ENCODE measurements at regions of chr17 and their contacts with region 1.

Region 1: DNA sequence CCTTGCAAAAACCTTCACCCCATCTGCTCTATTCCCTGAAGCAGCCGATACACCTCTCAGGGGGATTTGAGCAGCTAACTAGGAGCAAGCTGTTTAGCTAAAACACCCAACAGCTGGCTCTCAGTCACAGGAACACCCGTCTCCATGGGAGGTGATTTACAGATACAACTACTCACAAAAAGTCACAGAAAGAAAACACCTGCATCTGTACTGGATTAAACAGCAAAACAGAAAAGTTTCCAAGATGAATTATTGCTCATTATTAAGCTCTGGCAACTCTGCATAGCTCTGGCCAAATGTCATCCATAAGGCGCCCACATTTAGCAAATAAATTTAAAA is 22.3 kb downstream of the GJC1 start:
- DNase-seq: no peak
- ATAC-seq: 0 out of 2 replicates have a peak, but pooled peaks have one; percentile 39
- H3K4me3 ChIP-seq: no peak overlapping the region
- H3K27ac ChIP-seq: no peak overlapping the region
- H3K4me1 ChIP-seq: peaks cover 6% of the 10 kb centered on the region
- H3K27me3 ChIP-seq: no peaks in the 10 kb centered on the region
- CTCF ChIP-seq: no peak

Region 2: DNA sequence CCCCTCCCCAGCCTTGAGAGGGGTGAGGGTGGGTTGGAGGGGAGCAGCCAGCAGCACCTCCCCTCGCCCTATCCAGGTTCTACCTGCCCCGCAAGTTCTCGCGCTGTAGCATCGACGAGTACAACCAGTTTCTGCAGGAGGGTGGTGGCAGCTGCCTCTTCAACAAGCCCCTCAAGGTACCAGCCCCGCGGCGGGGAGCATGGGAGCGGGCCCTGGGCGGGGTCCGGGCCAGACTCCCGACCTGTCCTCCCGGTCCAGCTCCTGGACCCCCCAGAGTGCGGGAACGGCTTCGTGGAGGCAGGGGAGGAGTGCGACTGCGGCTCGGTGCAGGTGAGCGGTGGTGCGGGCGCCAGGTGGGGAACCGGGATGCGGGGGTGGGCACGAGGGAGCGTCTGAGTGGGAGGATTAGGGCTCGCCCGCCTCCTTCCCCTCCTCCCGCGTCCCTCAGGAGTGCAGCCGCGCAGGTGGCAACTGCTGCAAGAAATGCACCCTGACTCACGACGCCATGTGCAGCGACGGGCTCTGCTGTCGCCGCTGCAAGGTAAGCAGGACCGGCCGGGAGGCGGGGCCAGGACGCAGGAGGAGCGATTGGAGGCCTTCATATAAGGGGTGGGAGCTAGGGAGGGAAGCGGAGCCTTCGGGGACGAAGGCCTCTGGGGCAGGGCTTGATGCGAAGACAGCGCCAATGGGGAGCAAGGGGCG is 32.5 kb before region 1 on chr17:
- CTCF ChIA-PET with region 1: no interaction called
- POLR2A ChIA-PET with region 1: interaction called, 26 read pairs
- in situ Hi-C with region 1: no loop called
- intact Hi-C with region 1: no loop called
- DNase-seq: no peak
- ATAC-seq: peak; percentile 90
- H3K4me3 ChIP-seq: peak overlapping the region; percentile 58 to 65
- H3K27ac ChIP-seq: no peak overlapping the region
- H3K4me1 ChIP-seq: peaks cover 3% of the 10 kb centered on the region
- H3K27me3 ChIP-seq: no peaks in the 10 kb centered on the region
- CTCF ChIP-seq: peak; percentile 25

Region 3: GRCh38 chr17:44794851-44795413 is 12.9 kb before region 1 on chr17:
- CTCF ChIA-PET with region 1: no interaction called
- POLR2A ChIA-PET with region 1: interaction called, 17 read pairs
- in situ Hi-C with region 1: no loop called
- intact Hi-C with region 1: no loop called
- DNase-seq: peak; percentile 92
- ATAC-seq: peak; percentile 80
- H3K4me3 ChIP-seq: peak overlapping the region in 1 of 2 experiments; percentile 16; a peak in 1 of 4 replicates
- H3K27ac ChIP-seq: peak overlapping the region; percentile 60
- H3K4me1 ChIP-seq: peaks cover 36% of the 10 kb centered on the region
- H3K27me3 ChIP-seq: no peaks in the 10 kb centered on the region
- CTCF ChIP-seq: no peak

Region 4: DNA sequence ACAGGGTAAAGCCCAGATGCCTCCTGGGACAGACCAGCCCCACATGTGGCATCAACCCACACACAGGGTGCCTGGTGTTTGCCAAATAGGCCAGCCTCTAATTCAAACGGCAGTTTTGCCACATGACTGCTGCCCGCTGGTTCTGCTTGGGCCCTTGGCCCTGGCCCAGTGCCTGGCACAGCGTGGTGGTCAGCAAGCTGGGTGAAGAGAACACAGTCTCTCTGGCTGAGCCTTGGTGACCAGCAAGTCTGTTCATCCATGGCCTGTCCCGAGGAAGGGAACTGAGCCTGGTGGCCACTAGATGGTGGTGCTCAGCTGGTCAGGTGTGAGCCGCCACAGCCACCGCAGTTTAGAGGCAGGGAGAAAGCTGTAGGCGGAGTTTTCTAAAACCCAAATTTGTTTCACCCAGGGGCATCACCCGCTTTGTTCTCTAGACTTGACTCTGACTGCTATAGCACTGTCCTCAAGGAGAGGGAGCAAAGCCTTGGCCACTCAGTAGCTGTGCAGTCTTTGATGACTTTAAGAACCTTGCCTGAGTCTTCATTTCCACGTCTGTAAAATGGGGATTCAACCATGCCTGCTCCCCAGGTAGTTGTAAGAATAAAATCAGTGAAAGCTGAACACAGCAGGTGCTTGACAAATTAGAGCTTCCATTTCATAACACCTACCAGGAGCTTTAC is 112.2 kb after region 1 on chr17:
- CTCF ChIA-PET with region 1: no interaction called
- POLR2A ChIA-PET with region 1: no interaction called
- in situ Hi-C with region 1: no loop called
- intact Hi-C with region 1: no loop called
- DNase-seq: no peak
- ATAC-seq: peak; percentile 93
- H3K4me3 ChIP-seq: no peak overlapping the region
- H3K27ac ChIP-seq: no peak overlapping the region
- H3K4me1 ChIP-seq: no peaks in the 10 kb centered on the region
- H3K27me3 ChIP-seq: no peaks in the 10 kb centered on the region
- CTCF ChIP-seq: peak; percentile 85